Vagina (tissue), 2 donors: ENCODE measurements at regions of chr1 and their contacts with region 1.

Region 1: GRCh38 chr1:169546087-169546995 is 39.9 kb downstream of the F5 start:
- DNase-seq: no peak
- H3K4me3 ChIP-seq: no peak overlapping the region
- H3K27ac ChIP-seq: no peak overlapping the region
- H3K4me1 ChIP-seq: no peaks in the 10 kb centered on the region
- H3K27me3 ChIP-seq: no peaks in the 10 kb centered on the region
- CTCF ChIP-seq: peak; percentile 60 to 80 (median 76)
- POLR2A ChIP-seq: no peak

Region 2: DNA sequence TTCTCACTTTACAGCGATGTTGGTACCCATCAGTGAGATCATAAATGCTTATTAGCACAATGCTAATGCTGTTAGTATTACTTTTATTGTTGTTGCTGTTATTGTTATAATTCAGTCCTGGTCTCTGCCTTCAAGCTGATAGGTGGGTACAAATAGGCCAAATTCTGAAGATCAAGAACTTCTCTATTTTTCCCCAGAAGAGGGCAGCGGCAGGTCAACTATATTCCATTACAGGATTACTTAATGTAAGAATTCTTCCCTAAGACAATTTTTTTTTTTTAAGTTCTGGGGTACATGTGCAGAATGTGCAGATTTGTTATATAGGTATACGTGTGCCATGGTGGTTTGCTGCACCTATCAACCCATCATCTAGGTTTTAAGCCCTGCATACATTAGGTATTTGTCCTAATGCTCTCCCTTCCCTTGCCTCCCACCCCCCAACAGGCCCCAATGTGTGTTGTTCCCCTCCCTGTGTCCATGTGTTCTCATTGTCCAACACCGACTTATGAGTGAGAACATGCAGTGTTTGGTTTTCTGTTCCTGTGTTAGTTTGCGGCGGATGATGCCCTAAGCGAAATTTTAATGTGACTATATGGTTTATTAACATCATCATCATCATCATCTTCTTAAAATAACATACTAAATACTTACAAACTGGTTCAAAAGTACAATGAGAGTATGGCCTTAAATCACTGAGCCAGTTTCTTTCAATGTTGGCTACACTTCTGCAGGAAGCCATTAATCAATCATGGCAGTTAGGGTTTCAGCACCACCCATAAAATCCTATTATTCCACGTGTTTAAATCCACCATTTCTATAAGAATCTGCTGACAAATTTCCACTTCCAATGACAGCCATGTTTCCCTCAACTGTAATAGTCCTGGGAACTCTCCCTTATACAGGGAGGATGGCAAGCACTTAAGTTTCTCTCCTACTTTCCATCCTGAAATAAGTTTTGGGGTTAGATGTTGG is 79.8 kb before region 1 on chr1:
- intact Hi-C with region 1: loop called (anchors 5 kb)
- DNase-seq: no peak
- H3K4me3 ChIP-seq: no peak overlapping the region
- H3K27ac ChIP-seq: no peak overlapping the region
- H3K4me1 ChIP-seq: no peaks in the 10 kb centered on the region
- H3K27me3 ChIP-seq: no peaks in the 10 kb centered on the region
- CTCF ChIP-seq: peak in 1 of 3 experiments; percentile 30
- POLR2A ChIP-seq: no peak